ENCODE measurements at regions of chr1 and their contacts with region 1.

Region 1: DNA sequence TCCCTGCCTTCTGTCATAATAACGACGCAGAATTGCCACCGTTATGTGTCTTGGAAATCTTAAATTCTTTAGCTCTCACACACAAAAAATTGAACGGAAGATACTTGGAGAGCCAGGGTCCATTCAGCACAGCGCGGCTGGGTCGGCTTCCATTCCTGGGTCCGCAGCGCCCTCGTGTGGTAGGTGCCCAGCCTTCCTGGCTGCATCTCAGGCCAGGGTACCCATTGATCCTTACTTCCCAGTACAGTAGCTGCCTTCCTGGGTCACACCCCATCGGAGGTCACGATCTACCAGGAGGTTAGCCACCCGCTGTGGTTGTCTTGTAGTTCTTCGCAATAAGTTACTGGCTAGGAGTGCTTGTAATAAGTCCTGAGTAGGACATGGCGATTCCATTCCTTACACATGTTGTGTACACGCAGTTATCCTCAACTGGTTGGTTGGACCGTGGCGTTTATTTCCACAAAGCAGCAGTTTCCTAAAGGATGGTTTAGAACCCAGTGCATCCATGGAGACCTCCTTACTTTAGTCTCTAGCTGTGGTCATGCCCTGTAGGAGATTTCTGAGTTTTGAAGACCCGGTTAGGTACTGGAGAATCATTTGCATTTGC is 9.9 kb upstream of the MTARC1 start:
- DNase-seq: peak; percentile 89
- ATAC-seq: peak; percentile 95 to 97
- H3K4me3 ChIP-seq: no peak overlapping the region
- H3K27ac ChIP-seq: no peak overlapping the region
- H3K4me1 ChIP-seq: peaks cover 7% of the 10 kb centered on the region
- H3K27me3 ChIP-seq: no peaks in the 10 kb centered on the region
- CTCF ChIP-seq: peak; percentile 94

Region 2: GRCh38 chr1:220680085-220680687 is 96.6 kb before region 1 on chr1:
- intact Hi-C with region 1: loop called (anchors 5 kb)
- DNase-seq: no peak
- ATAC-seq: peak; percentile 76 to 86
- H3K4me3 ChIP-seq: no peak overlapping the region
- H3K27ac ChIP-seq: no peak overlapping the region
- H3K4me1 ChIP-seq: peaks cover 9% of the 10 kb centered on the region
- H3K27me3 ChIP-seq: no peaks in the 10 kb centered on the region
- CTCF ChIP-seq: peak; percentile 69

Measured in lower lobe of right lung (tissue), 2 donors.